Left cardiac atrium (tissue), 4 donors: ENCODE measurements at regions of chr2 and their contacts with region 1.

Region 1: GRCh38 chr2:200713003-200713703 is 98.6 kb upstream of the BZW1 start:
- DNase-seq: peak; percentile 91
- ATAC-seq: peak; percentile 98 to 99

Region 2: GRCh38 chr2:200795044-200795443 is 81.9 kb after region 1 on chr2:
- intact Hi-C with region 1: loop called in 1 of 2 experiments (anchors 5 kb)
- DNase-seq: no peak
- ATAC-seq: peak; percentile 70 to 89

Region 3: GRCh38 chr2:200811336-200812121 is 98.4 kb after region 1 on chr2 and contains the start of gene BZW1:
- intact Hi-C with region 1: loop called (anchors 2 to 5 kb)
- DNase-seq: peak; percentile 96
- ATAC-seq: peak; percentile 94 to 95
- total RNA-seq, gene BZW1: 104 to 176 TPM